ENCODE measurements at regions of chr3 and their contacts with region 1.

Region 1: GRCh38 chr3:119463171-119464169 is at the start of gene TMEM39A:
- DNase-seq: peak; percentile 97 to 100 (median 98)
- ATAC-seq: peak; percentile 87
- H3K4me3 ChIP-seq: peak within 1 kb of the TSS; percentile 90
- H3K4me3 Mint-ChIP-seq: peak within 1 kb of the TSS; percentile 93
- H3K27ac ChIP-seq: peak within 1 kb of the TSS; percentile 87 to 93
- H3K27ac Mint-ChIP-seq: peak within 1 kb of the TSS; percentile 97
- H3K4me1 ChIP-seq: peaks cover 28% of the 10 kb centered on the region
- H3K4me1 Mint-ChIP-seq: peaks cover 37% of the 10 kb centered on the region
- H3K27me3 ChIP-seq: no peaks in the 10 kb centered on the region
- H3K27me3 Mint-ChIP-seq: peaks cover 4% of the 10 kb centered on the region
- CTCF ChIP-seq: no peak
- total RNA-seq, gene TMEM39A: 54.1 to 58.0 TPM

Region 2: DNA sequence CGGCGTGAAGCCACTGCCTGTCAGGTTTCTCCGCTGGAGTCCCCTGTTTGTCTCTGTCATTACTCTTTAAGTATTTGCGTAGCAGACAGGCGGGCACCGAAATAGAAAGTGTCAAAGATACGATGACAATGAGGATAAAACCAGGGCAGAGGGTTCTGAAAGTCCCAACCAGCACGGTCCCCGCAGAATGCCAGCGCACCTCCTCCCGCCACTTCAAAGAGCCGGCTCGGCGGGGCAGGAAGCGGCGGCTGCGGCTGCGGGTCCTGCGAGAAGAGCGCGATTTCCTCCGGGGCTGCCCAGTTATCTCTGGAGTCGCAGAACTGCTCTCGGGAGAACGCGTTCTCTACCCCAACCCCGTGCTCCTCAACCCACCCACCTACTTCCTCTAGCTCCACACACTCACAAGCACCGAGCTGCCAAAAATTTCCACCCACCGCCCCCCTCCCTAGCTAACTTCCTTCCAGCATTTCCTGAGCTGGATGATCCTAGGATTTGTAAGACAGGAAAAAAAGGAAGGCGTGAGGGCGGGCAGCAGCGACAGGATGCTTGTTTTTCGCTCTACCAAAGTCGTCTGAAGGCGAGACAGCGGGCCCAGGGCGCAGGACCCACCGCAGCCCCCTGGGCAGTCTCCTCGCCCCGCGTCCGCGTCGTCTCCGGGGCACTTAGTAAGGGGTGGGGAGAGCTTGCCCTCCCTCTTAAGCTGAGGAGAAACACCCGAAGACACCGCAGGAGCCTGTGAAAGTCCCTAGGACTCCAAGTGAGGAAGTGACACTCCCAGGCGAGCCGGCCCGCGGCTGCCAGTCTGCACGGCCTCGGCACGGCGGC is 169.4 kb before region 1 on chr3 and contains the start of gene ARHGAP31:
- CTCF ChIA-PET with region 1: interaction called, 3 read pairs
- POLR2A ChIA-PET with region 1: interaction called, 31 read pairs
- intact Hi-C with region 1: loop called (anchors 5 to 10 kb)
- DNase-seq: peak; percentile 60 to 96 (median 78)
- ATAC-seq: peak; percentile 68
- H3K4me3 ChIP-seq: peak within 1 kb of the TSS; percentile 84
- H3K4me3 Mint-ChIP-seq: peak within 1 kb of the TSS; percentile 84
- H3K27ac ChIP-seq: peak within 1 kb of the TSS; percentile 95 to 96
- H3K27ac Mint-ChIP-seq: peak within 1 kb of the TSS; percentile 100
- H3K4me1 ChIP-seq: peaks cover 65% of the 10 kb centered on the region
- H3K4me1 Mint-ChIP-seq: peaks cover 74% of the 10 kb centered on the region
- H3K27me3 ChIP-seq: no peaks in the 10 kb centered on the region
- H3K27me3 Mint-ChIP-seq: no peaks in the 10 kb centered on the region
- CTCF ChIP-seq: no peak
- total RNA-seq, gene ARHGAP31: 2.4 to 2.9 TPM

Region 3: DNA sequence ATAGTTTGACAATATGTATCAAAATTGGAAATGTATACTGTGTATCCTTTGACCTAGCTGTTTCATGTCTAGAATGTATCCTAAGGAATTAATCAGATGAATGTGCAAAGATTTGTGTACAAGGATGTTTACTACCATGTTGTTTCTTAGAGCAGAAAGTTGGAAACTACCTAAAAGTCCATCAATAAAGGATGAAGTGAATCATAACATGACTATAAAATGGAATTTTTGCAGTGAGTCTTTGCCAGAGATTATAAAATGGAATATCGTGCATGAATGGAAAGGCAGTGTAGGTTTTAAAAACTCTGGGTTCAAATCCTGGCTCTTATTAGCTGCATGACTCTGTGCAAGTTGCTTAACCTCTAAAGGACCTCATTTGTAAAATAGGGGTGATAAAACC is 19.6 kb after region 1 on chr3:
- CTCF ChIA-PET with region 1: no interaction called
- POLR2A ChIA-PET with region 1: no interaction called
- intact Hi-C with region 1: no loop called
- DNase-seq: no peak
- ATAC-seq: no peak
- H3K4me3 ChIP-seq: no peak overlapping the region
- H3K4me3 Mint-ChIP-seq: no peak overlapping the region
- H3K27ac ChIP-seq: no peak overlapping the region
- H3K27ac Mint-ChIP-seq: no peak overlapping the region
- H3K4me1 ChIP-seq: no peaks in the 10 kb centered on the region
- H3K4me1 Mint-ChIP-seq: no peaks in the 10 kb centered on the region
- H3K27me3 ChIP-seq: no peaks in the 10 kb centered on the region
- H3K27me3 Mint-ChIP-seq: no peaks in the 10 kb centered on the region
- CTCF ChIP-seq: no peak

Region 4: GRCh38 chr3:119498186-119498987 is 34.9 kb after region 1 on chr3 and contains the start of gene TIMMDC1:
- CTCF ChIA-PET with region 1: interaction called, 7 read pairs
- POLR2A ChIA-PET with region 1: interaction called, 85 read pairs
- intact Hi-C with region 1: loop called in 1 of 2 experiments (anchors 1 kb)
- DNase-seq: peak; percentile 94 to 99 (median 96)
- ATAC-seq: peak; percentile 97
- H3K4me3 ChIP-seq: peak within 1 kb of the TSS; percentile 95
- H3K4me3 Mint-ChIP-seq: peak within 1 kb of the TSS; percentile 99
- H3K27ac ChIP-seq: peak within 1 kb of the TSS; percentile 90 to 93
- H3K27ac Mint-ChIP-seq: peak within 1 kb of the TSS; percentile 99
- H3K4me1 ChIP-seq: peaks cover 20% of the 10 kb centered on the region
- H3K4me1 Mint-ChIP-seq: peaks cover 42% of the 10 kb centered on the region
- H3K27me3 ChIP-seq: no peaks in the 10 kb centered on the region
- H3K27me3 Mint-ChIP-seq: no peaks in the 10 kb centered on the region
- CTCF ChIP-seq: no peak
- total RNA-seq, gene TIMMDC1: 14.4 to 18.3 TPM

Region 5: DNA sequence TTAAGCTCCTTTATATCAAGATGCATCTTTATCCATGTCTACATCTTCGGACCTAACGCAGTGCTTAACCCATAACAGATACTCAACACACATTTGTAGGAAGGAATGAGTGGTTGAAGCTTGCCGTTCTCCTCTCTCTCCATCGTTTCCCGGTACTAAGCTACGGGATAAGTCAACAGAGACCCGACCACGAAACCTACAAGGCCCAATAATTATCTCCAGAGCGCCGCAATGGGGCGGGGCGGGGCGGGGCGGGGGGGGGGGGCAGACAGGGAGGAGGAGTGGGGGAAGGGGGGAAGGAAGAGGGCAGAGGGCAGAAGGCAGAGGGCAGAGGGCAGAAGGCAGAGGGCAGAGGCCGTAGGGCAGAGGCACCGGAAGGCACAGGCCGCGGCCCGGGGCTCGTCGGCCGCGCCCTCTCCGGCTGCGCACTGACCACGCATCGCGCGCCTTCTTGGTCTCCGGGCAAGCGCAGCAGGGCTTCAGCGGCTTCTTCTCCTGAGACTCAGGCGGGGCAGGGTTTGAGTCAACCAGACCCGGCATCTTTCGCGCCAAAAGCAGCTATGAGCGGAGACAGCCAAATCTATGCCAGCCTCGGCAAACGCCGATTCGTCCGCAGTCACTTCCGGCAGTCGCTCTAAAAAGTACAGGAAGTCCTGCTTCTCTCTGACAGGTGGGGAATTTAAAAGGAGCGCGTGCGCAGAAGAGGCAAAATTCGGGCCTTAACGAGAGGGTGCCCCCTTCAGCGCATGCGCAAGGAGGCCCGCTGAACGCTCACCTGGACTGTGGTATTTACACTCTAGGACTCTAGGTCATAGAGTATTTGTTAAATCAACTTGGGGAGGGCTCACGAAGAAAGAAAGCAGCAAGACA is 213.5 kb after region 1 on chr3 and contains the start of gene COX17:
- CTCF ChIA-PET with region 1: no interaction called
- POLR2A ChIA-PET with region 1: interaction called, 10 read pairs
- intact Hi-C with region 1: loop called in 1 of 2 experiments (anchors 5 kb)
- DNase-seq: peak; percentile 92 to 99 (median 95)
- ATAC-seq: peak; percentile 87
- H3K4me3 ChIP-seq: peak within 1 kb of the TSS; percentile 68
- H3K4me3 Mint-ChIP-seq: peak within 1 kb of the TSS; percentile 87
- H3K27ac ChIP-seq: peak within 1 kb of the TSS; percentile 81 to 85
- H3K27ac Mint-ChIP-seq: peak within 1 kb of the TSS; percentile 91
- H3K4me1 ChIP-seq: peaks cover 8% of the 10 kb centered on the region
- H3K4me1 Mint-ChIP-seq: peaks cover 36% of the 10 kb centered on the region
- H3K27me3 ChIP-seq: no peaks in the 10 kb centered on the region
- H3K27me3 Mint-ChIP-seq: no peaks in the 10 kb centered on the region
- CTCF ChIP-seq: no peak
- total RNA-seq, gene COX17: 24.6 to 26.3 TPM

Region 6: DNA sequence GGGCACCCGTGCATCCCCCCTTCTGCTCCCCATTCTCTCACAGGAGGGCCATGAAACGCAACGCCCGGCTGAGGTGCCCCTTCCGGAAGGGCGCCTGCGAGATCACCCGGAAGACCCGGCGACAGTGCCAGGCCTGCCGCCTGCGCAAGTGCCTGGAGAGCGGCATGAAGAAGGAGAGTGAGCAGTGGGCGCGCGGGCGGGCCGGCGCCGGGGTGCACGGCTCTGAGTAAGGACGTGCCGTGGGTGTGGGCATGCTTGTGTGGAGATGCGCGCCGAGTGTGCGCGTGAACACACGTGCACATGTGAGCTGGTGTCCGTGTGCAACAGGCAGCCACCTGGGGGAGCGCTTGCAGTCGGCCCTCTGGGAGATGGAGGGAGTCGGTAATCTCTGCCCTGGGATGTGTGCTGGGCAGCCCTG is 346.6 kb after region 1 on chr3:
- CTCF ChIA-PET with region 1: no interaction called
- POLR2A ChIA-PET with region 1: no interaction called
- intact Hi-C with region 1: no loop called
- DNase-seq: peak; percentile 27 to 76 (median 46)
- ATAC-seq: peak; percentile 96
- H3K4me3 ChIP-seq: peak overlapping the region; percentile 69
- H3K4me3 Mint-ChIP-seq: peak overlapping the region; percentile 86
- H3K27ac ChIP-seq: no peak overlapping the region
- H3K27ac Mint-ChIP-seq: peak overlapping the region; percentile 43
- H3K4me1 ChIP-seq: peaks cover 17% of the 10 kb centered on the region
- H3K4me1 Mint-ChIP-seq: peaks cover 12% of the 10 kb centered on the region
- H3K27me3 ChIP-seq: no peaks in the 10 kb centered on the region
- H3K27me3 Mint-ChIP-seq: no peaks in the 10 kb centered on the region
- CTCF ChIP-seq: peak; percentile 27

Region 7: DNA sequence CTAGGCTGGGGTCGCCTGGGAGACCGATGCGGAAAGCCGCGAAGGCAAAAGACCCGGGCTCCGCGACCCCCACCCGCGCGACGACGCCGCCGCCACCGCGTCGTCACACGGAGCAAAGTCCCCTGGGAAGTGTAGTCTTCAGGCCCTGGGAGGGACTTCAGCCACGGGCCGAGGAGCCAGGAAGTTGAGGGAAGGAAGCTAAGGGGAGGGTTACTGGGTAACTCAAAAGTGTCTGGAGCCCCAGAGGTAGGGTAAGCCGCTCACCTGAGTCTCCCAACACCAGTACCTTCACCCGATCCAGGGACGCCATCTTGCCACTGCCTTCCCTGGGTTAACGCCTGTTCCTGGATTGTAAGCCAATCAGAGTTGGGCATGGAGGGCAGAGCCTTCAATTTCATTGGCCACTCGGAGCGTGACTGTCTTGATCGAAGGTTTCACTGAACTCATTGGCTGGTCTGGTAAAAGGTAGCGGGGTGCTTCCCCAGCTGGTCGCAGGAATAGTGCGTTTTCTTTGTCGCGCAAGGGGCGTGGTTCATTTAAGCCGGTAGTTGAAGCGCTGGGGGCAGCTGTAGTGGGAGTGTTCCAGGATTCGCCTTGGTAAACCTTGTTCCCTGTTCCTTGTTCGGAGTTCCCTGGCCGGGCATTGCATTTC is 1278.9 kb after region 1 on chr3 and contains the starts of genes GTF2E1 and RABL3:
- CTCF ChIA-PET with region 1: no interaction called
- POLR2A ChIA-PET with region 1: interaction called, 3 read pairs
- intact Hi-C with region 1: loop called (anchors 10 kb)
- DNase-seq: peak; percentile 90 to 99 (median 94)
- ATAC-seq: peak; percentile 94
- H3K4me3 ChIP-seq: peak within 1 kb of the TSS; percentile 61
- H3K4me3 Mint-ChIP-seq: peak within 1 kb of the TSS; percentile 95
- H3K27ac ChIP-seq: peak within 1 kb of the TSS; percentile 99
- H3K27ac Mint-ChIP-seq: peak within 1 kb of the TSS; percentile 96
- H3K4me1 ChIP-seq: peaks cover 25% of the 10 kb centered on the region
- H3K4me1 Mint-ChIP-seq: peaks cover 50% of the 10 kb centered on the region
- H3K27me3 ChIP-seq: no peaks in the 10 kb centered on the region
- H3K27me3 Mint-ChIP-seq: no peaks in the 10 kb centered on the region
- CTCF ChIP-seq: no peak
- total RNA-seq, gene GTF2E1: 6.3 to 7.5 TPM
- total RNA-seq, gene RABL3: 12.9 to 13.6 TPM

Measured in CD4-positive, alpha-beta T cell (primary cell).